ENCODE measurements at regions of chr2 and their contacts with region 1.

Region 1: DNA sequence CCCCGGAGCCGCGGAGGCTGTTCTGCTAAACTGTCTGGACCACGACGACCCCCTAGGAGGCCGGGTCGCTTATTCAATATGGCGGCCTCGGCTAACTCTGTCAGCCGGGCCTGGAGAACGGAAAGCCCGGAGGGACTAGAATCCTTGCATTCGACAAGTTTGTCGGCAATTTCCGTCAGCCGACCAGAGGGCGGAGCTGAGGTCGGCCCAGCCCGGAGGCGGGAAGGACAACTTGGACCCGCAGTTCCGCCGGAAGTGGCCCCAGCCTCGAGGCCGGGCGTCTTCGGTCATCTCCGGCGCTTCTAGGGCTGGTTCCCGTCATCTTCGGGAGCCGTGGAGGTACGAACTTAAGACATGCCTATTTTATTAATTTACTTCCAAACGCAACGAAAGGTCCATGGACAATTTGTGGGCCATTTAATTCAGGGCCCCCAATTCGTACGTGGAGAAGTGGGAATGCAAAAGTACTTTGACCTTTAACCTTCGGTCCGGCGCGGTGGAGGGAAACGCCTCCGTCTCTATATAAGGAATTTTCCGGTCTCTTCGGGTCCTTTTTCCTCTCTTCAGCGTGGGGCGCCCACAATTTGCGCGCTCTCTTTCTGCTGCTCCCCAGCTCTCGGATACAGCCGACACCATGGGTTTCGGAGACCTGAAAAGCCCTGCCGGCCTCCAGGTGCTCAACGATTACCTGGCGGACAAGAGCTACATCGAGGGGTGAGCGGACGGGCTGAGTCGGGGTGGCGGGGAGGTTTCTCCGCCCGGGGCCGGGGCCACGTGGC is at the starts of genes EEF1B2 and NDUFS1:
- DNase-seq: peak; percentile 97
- H3K4me3 Mint-ChIP-seq: peak within 1 kb of the TSS; percentile 78
- H3K27ac Mint-ChIP-seq: peak within 1 kb of the TSS; percentile 97
- H3K4me1 Mint-ChIP-seq: peaks cover 20% of the 10 kb centered on the region
- H3K27me3 Mint-ChIP-seq: no peaks in the 10 kb centered on the region
- CTCF ChIP-seq: no peak
- total RNA-seq, gene EEF1B2: 340 and 415 TPM in 2 replicates
- total RNA-seq, gene NDUFS1: 79.2 and 81.0 TPM in 2 replicates

Region 2: DNA sequence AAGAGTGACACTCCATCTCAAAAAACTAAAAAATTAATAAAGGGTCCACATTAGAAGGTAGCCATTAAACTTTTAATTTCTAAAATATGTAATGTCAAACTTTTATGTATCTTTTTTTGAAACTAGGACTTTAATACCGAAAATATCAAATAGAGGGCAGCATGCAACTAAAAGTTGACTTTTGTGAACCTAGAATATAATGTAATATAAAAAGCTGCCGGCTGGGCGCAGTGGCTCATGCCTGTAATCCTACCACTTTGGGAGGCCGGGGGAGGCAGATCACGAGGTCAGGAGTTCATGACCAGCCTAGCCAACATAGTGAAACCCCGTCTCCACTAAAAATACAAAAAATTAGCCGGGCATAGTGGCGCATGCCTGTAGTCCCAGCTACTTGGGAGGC is 136.4 kb before region 1 on chr2:
- CTCF ChIA-PET with region 1: no interaction called
- intact Hi-C with region 1: loop called (anchors 10 kb)
- DNase-seq: no peak
- H3K4me3 Mint-ChIP-seq: no peak overlapping the region
- H3K27ac Mint-ChIP-seq: no peak overlapping the region
- H3K4me1 Mint-ChIP-seq: no peaks in the 10 kb centered on the region
- H3K27me3 Mint-ChIP-seq: no peaks in the 10 kb centered on the region
- CTCF ChIP-seq: no peak

Region 3: DNA sequence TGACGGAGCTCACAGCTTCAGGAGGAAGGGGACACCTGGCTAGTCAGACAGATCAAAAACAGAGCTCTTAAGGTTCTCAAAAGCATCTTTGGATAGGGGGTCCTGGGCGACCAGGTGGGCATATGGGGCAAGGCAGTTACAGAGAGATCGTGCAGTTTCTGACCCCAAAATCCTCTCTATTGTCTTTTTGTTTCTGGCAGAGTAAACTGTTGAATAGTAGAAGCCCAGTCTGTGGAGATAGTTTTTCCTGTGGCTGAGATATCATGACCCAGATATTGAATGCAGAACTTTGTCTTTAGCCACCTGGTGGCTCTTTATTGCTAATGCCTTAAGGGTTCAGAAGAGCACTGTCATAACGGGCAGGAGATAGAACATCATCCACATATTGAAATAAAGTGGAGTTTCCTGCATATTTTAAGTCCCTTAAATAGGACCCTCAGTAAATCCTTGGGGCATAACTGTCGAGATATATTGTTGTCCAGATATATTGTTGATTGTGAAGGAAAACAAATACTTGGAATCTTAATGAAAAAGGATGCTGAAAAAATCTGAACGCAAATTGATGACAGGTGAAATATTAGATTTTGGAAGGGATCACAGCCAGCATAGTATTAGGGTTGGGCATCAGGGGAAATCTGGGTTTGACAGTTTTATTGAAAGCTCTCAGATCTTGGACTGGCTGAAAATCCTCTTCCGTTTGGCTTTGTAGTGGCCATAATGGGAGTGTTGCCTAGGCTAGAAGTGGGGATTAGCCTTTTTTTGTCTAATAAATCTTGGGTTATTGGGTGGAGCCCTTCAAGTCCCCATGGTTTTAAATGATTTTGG is 100.9 kb after region 1 on chr2:
- CTCF ChIA-PET with region 1: interaction called, 3 read pairs
- intact Hi-C with region 1: loop called (anchors 2 kb)
- DNase-seq: peak; percentile 20
- H3K4me3 Mint-ChIP-seq: no peak overlapping the region
- H3K27ac Mint-ChIP-seq: no peak overlapping the region
- H3K4me1 Mint-ChIP-seq: peaks cover 16% of the 10 kb centered on the region
- H3K27me3 Mint-ChIP-seq: peaks cover 77% of the 10 kb centered on the region
- CTCF ChIP-seq: peak; percentile 38

Measured in Calu3 (cell line).